ENCODE measurements at regions of chr17 and their contacts with region 1.

Region 1: DNA sequence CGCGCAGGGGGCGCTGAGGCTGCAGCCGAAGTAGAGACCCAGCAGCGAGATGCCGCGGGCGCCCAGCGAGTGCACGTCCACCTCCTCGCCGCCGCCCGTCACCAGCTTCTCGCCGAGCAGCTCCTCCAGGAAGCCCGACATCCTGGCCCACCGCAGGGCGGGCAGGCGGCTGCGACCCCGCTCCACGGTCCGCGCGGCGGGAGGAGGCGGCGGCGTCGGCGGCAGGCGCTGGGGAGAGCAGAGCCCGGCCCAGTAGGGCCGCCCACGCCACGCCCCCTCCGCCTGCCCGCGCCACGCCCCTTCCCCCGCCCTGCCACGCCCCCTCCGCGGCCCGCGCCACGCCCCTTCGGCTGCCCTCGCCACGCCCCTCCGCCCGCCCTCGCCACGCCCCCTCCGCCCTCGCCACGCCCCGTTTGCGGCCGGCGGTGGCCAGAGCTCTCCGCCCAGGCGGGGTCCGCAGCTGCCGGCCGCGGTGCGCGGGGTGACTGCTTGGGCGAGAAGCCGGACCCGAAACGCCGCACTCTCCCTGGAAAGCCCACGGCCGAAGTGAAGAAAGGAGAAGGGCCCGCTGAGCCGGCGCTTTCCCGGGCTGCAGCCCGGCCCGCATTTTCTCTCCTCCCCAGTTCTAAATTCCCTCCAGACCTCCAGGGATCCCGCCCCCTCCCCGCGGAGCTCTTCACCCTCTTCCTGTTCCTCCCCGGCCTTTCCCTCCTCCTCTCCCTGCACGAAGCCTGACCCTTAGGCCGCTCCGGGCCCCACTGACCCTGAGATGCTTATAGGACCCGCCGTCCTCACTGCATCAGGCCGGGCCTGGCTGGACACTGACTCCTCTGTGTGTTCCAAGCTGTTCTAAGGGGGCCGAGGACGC is at the start of gene NXN:
- DNase-seq: peak; percentile 99
- H3K4me3 ChIP-seq: peak within 1 kb of the TSS; percentile 69 to 71
- H3K27ac ChIP-seq: peak within 1 kb of the TSS; percentile 32 to 65; a peak in 3 of 4 replicates
- H3K4me1 ChIP-seq: peaks cover 0 to 16% of the 10 kb centered on the region in 2 experiments; a peak in 2 of 4 replicates
- H3K27me3 ChIP-seq: peaks cover 26% of the 10 kb centered on the region
- CTCF ChIP-seq: peak; percentile 34; the same call in 1 of the 2 replicates
- EP300 ChIP-seq: no peak
- RAD21 ChIP-seq: peak; percentile 17; the same call in 1 of the 2 replicates
- polyA plus RNA-seq, gene NXN: 19.5 and 23.9 TPM in 2 replicates

Region 2: DNA sequence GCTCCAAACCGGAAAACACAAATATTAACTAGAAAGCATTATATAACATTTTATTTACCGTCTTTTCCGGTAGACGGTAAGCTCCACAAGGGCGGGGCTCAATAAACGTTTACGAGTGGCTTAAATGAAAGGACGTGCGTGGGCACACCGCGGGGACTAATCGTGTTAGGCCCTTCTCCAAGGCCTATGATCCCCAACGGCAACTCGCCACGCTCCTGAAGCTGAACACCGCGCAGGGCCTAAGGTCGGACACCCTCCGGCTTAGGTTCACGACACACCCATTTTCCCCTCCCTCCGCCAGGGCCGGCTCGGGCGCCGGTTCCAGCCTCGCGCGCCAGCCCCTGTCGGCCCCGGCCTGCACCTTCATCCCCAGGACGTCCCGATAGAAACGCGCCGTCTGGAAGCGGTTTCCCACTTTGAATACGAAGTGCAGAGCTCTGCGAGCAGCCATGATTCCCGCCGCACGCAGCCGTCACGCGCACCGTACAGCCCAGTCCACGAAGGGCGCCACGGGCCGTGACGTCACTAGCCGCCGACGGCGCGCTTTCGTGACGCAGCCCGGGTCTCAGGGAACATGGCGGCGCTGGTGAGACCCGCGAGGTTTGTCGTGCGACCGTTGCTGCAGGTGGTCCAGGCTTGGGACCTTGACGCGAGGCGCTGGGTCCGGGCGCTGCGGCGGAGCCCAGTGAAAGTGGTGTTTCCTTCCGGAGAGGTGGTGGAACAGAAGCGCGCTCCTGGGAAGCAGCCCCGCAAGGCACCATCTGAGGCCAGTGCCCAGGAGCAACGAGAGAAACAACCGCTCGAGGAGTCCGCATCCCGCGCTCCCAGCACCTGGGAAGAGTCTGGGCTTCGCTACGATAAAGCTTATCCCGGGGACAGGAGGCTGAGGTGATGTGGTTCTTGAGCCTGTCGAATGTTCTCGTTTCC is 197.7 kb before region 1 on chr17 and contains the starts of genes GLOD4 and MRM3:
- CTCF ChIA-PET with region 1: interaction called, 20 read pairs
- POLR2A ChIA-PET with region 1: interaction called, 8 read pairs
- DNase-seq: peak; percentile 97
- H3K4me3 ChIP-seq: peak within 1 kb of the TSS; percentile 98 to 99
- H3K27ac ChIP-seq: peak within 1 kb of the TSS; percentile 56 to 77
- H3K4me1 ChIP-seq: peaks cover 9 to 15% of the 10 kb centered on the region in 2 experiments
- H3K27me3 ChIP-seq: no peaks in the 10 kb centered on the region
- CTCF ChIP-seq: no peak; the same call in 1 of the 2 replicates
- EP300 ChIP-seq: no peak
- RAD21 ChIP-seq: no peak
- polyA plus RNA-seq, gene GLOD4: 34.3 and 40.0 TPM in 2 replicates
- polyA plus RNA-seq, gene MRM3: 16.4 and 17.4 TPM in 2 replicates

Region 3: DNA sequence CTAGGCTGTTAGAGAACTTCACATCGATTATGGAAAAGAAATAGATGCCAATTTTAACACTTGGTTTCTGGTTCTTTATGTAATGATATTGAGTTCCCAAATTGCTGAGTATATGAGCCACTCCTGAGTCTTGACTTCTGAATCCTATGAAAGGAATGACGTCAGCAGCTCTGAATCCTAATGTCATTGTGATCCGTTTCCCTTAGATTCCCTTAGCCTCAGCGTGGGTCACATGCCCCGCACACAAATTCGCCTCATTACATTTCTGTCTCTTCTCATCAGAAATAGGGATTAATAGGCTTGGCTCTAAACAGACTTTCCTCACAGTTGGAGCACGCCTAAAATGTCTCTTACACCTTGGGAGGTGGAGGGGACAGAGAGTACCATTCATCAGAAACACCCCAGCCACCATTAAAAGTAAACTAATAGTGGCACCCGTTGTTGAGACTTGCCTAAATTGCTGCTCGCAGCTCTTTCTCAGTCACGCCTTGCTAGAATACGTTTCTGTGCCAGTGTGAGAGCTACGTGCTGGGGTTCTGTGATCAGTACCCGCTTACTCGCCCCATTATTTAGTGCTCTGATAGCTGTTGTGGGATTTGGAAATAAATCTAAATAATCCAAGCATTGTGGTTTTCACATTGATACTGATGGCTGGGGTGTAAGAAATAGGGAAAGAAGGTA is 190.5 kb before region 1 on chr17:
- CTCF ChIA-PET with region 1: interaction called, 155 read pairs
- POLR2A ChIA-PET with region 1: interaction called, 3 read pairs
- DNase-seq: no peak
- H3K4me3 ChIP-seq: no peak overlapping the region
- H3K27ac ChIP-seq: no peak overlapping the region
- H3K4me1 ChIP-seq: no peaks in the 10 kb centered on the region
- H3K27me3 ChIP-seq: no peaks in the 10 kb centered on the region
- CTCF ChIP-seq: no peak
- EP300 ChIP-seq: no peak
- RAD21 ChIP-seq: no peak

Region 4: DNA sequence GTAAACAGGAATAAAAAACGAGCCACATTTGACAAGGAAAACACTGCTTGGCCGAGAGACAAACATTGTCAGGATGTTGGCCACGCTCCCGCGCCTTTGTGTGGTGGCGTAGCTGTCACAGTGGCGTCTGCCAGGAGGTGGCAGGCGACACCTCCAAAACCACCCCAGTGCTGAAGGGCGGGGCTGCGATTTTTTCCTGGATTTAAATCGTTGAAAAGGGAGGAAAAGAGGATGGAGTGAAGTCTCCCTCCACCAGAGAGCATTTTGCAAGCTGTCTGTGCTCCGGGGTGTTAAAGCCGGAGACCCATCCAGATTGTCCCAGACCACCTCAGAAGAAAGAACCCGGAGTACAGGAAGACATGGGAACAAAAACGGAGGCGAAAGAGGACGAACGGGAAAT is 184.9 kb before region 1 on chr17:
- CTCF ChIA-PET with region 1: interaction called, 155 read pairs
- POLR2A ChIA-PET with region 1: interaction called, 3 read pairs
- DNase-seq: peak; percentile 90
- H3K4me3 ChIP-seq: peak overlapping the region in 1 of 2 experiments; percentile 9; a peak in 1 of 4 replicates
- H3K27ac ChIP-seq: peak overlapping the region in 1 of 2 experiments; percentile 7; a peak in 1 of 4 replicates
- H3K4me1 ChIP-seq: peaks cover 0 to 13% of the 10 kb centered on the region in 2 experiments; a peak in 1 of 4 replicates
- H3K27me3 ChIP-seq: no peaks in the 10 kb centered on the region
- CTCF ChIP-seq: peak; percentile 72
- EP300 ChIP-seq: no peak
- RAD21 ChIP-seq: peak; percentile 84

Region 5: DNA sequence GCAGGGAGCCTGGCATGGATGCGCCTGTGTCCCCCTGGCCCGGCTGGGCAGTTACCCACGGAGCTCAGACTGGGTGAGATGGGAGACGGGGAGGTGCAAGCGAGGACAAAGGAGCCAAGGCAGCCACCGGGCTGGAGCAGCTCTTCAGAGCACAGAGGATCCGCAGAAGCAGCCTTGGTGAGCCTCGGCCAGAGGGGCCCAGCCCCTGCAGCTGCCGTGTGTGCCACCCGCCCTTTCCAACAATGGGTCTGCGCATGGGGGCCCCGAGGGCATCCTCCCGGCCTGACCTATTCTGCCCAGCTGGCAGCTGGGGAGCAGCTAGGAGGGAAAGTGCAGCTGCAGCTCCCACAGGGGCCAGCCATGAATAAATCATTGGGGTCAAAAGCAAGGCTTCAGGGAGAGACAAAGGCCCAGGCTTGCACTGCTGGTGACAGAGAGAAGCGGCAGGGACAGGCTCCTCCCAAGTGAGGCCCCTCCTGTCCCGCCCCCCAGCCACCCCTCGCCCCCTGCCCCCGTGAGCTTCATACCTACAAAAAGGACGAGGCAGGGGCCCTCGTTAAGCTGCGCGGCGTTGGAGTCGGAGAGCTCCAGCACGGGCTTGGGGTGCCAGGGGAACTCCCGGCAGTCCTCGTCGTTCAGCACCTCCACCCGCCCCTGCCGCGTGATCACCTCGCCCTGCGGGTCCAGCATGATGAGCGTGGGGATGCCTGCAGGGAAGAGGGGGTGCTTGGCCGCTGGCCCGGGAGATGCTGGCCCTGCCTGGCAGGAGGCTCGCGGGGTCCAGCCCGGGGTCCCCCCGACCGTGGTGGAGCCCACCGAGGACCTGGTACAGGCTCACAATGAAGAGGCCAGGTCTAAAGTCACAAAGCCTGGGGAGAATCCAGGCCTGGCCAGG is 175.0 kb before region 1 on chr17:
- CTCF ChIA-PET with region 1: interaction called, 155 read pairs
- POLR2A ChIA-PET with region 1: interaction called, 4 read pairs
- DNase-seq: no peak
- H3K4me3 ChIP-seq: no peak overlapping the region
- H3K27ac ChIP-seq: no peak overlapping the region
- H3K4me1 ChIP-seq: no peaks in the 10 kb centered on the region
- H3K27me3 ChIP-seq: peaks cover 54% of the 10 kb centered on the region; the same call in 1 of the 2 replicates
- CTCF ChIP-seq: no peak
- EP300 ChIP-seq: no peak
- RAD21 ChIP-seq: no peak

Region 6: GRCh38 chr17:909642-910323 is 70.0 kb before region 1 on chr17:
- CTCF ChIA-PET with region 1: no interaction called
- POLR2A ChIA-PET with region 1: no interaction called
- DNase-seq: no peak
- H3K4me3 ChIP-seq: no peak overlapping the region
- H3K27ac ChIP-seq: peak overlapping the region in 1 of 2 experiments; percentile 62; a peak in 1 of 4 replicates
- H3K4me1 ChIP-seq: no peaks in the 10 kb centered on the region; a peak in 1 of 4 replicates
- H3K27me3 ChIP-seq: peaks cover 11% of the 10 kb centered on the region; the same call in 1 of the 2 replicates
- CTCF ChIP-seq: no peak
- EP300 ChIP-seq: no peak
- RAD21 ChIP-seq: no peak

Region 7: GRCh38 chr17:996554-997344 is 17.0 kb after region 1 on chr17 and contains the start of gene TIMM22:
- CTCF ChIA-PET with region 1: interaction called, 44 read pairs
- POLR2A ChIA-PET with region 1: no interaction called
- DNase-seq: peak; percentile 96
- H3K4me3 ChIP-seq: peak within 1 kb of the TSS; percentile 68 to 99
- H3K27ac ChIP-seq: peak within 1 kb of the TSS; percentile 87 to 92
- H3K4me1 ChIP-seq: peaks cover 12 to 15% of the 10 kb centered on the region in 2 experiments; a peak in 3 of 4 replicates
- H3K27me3 ChIP-seq: no peaks in the 10 kb centered on the region
- CTCF ChIP-seq: peak; percentile 88
- EP300 ChIP-seq: peak; percentile 88 to 95
- RAD21 ChIP-seq: peak; percentile 77
- polyA plus RNA-seq, gene TIMM22: 9.9 and 10.7 TPM in 2 replicates